Right ventricle myocardium superior (tissue), 1 donor: ENCODE measurements at regions of chr4 and their contacts with region 1.

Region 1: DNA sequence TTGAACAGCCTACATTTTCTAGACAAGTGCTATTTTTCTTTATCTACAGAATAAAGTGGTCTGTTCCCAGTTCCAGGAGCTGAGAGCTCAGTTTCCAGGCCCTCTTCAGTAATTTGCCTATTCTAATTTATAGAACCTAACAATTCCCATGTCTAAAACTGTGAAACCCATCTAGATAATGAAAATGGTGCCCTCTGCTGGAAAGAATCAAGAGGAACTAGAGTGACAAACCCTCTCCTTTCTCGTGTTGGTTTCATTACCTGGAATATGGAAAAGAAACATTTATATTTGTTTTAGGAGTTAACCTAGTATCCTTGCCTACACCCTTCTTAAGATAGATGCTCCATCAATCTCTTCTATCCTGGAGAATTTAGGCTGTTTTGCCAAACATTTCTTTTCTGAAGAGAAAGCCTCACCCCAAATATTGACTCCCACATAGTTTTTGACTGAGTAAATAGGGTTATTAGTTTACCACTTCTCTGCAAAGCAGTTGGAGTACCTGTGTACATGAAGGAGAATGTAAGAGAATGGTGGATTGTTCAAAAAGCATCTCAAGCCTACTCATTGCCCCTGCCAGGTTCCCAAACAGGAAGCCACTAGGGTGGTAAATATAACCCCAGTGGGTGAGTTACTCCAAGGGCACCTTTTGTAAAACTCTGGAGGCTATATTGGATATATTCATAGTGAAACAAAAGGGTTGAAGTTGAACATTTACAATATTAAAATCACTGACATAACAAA is 121.6 kb downstream of the RASL11B start:
- DNase-seq: no peak
- ATAC-seq: peak; percentile 85

Region 2: GRCh38 chr4:52234561-52235440 is 748.9 kb before region 1 on chr4:
- intact Hi-C with region 1: loop called (anchors 10 kb)
- DNase-seq: no peak
- ATAC-seq: peak; percentile 93

Region 3: DNA sequence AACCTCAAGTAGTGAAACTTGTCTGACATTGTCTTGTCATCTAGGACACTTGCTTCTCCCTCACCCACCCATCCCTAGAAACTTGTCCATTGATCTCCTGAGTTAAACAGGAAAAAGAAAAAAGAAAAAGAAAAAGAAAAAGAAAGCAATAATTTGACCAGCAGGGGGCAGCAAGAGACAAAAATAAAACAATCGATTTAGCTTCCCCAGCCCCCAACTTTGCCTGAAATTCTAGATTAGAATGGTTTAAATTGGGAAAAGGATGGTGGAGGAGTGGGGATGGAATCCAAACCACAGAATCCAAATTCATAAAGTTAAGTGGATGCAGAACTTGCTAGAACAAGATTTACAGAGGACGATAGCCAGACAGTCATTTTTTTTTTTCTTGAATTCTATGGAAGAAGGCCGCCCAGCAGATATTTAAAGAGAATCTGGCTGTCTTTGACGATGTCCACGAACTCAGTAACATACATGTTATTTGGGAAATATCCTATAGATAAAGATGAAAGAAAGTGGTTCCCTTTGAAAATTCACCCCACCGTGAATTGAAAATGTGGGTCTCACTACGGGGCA is 607.5 kb before region 1 on chr4:
- intact Hi-C with region 1: loop called (anchors 2 kb)
- DNase-seq: no peak
- ATAC-seq: no peak

Region 4: DNA sequence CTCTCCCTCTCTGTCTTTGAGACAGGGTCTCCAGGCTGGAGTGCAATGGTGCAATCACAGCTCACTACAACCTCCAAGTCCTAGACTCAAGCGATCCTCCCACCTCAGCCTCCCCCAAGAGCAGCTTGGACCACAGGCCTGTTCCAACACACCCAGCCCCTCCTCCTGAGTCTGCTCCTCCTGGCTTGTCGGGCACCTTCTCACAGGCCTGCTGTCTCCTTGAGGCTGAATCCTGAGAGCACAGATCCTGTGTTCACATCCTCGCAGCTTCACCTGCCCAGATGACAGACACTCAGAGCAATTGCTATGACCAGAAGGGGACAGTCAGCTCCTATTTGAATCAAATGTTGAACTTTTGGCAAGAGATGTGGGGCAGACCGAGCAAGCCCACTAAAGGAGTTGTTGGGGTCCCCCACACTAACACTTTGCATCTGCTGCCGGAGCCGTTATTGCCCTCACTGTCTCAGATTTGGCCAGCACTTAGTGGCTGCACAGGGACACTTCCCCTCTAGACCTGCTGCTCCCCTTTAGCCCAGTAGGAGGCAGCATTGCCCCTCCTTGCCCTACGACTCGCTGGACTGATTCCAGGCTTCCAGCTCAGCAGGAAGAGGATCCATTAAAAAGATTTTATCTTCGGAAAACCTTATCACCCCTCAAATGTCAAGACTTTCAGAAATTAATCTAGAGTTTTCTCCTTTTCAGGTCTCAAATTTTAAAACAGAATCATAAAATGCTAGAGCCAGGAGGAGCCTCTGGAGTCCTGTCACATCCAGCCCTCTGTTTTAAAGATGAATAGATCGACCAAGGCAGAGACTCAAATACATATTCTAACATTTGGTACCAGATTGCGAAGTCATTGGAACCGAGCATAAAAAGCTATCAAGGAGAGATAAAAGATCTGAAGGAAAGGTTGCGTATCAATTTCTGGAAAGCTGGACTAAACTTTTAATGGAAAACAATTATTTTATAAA is 438.3 kb before region 1 on chr4:
- intact Hi-C with region 1: loop called (anchors 5 kb)
- DNase-seq: peak; percentile 85
- ATAC-seq: peak; percentile 82

Region 5: DNA sequence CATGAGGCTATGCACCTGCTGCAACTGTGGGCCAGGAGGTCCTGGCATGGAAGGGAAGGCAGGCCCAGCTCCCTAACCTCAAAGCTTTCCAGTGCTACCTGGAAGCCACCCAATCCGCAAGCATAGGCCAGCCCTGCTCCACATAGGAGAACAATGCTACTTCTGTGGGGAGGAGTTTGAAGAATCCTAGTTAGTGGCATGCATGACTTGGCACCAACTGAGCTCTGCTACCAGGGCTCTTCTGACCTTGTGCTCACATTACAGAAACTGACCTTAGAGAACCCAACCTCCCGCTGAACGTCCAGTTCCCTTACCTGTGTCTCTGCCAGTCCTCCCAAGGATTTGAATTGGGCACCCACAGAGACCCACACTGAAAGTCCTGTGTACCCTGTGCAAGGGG is 383.5 kb before region 1 on chr4:
- intact Hi-C with region 1: no loop called
- DNase-seq: peak; percentile 66
- ATAC-seq: peak; percentile 86

Region 6: GRCh38 chr4:52721968-52722815 is 261.5 kb before region 1 on chr4:
- intact Hi-C with region 1: loop called (anchors 10 kb)
- DNase-seq: peak; percentile 94
- ATAC-seq: peak; percentile 98